Activated CD4-positive, alpha-beta T cell treated with anti-CD3 and anti-CD28 coated beads for 36 hours (primary cell): ENCODE measurements at regions of chr18 and their contacts with region 1.

Region 1: DNA sequence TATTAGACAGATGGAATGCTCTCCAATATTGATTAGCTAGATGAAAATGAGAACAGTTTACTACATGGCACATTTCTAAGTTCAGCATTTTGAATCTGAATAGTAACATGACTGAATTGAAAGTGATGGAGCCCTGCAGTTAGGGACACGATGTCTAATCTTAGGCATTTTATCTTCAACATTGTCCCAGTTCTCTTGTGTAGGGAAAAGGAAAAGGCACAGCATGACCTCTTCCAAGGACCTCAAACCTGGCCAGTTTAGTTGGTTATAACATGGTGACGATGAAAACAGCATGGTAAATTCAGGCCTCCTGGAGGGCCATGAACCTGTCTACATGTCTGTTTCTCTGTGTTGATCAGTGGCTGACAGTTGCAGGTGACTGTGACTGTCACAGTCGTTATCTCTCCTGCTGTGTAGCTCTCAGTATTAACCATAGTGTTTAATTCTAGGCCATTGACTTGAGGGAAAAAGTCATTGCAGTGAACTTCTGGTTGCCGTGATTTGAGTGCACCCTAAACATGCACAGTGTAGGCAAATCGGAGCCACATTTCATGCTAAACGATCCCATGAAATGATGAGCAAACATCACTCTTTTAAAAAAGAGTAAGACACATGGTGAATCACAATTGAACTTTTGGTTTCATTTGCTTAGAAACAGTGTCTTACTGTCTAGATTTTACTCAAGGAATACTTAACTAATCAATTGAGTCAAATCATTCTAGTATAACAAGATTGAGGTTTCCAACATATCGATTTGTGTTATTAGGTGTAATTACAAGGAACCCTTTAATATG is 129.7 kb downstream of the PHLPP1 start:
- DNase-seq: peak; percentile 63
- ATAC-seq: peak; percentile 90
- H3K4me3 Mint-ChIP-seq: peak overlapping the region; percentile 15
- H3K27ac Mint-ChIP-seq: peak overlapping the region; percentile 91
- H3K4me1 Mint-ChIP-seq: peaks cover 40% of the 10 kb centered on the region
- H3K27me3 Mint-ChIP-seq: no peaks in the 10 kb centered on the region

Region 2: DNA sequence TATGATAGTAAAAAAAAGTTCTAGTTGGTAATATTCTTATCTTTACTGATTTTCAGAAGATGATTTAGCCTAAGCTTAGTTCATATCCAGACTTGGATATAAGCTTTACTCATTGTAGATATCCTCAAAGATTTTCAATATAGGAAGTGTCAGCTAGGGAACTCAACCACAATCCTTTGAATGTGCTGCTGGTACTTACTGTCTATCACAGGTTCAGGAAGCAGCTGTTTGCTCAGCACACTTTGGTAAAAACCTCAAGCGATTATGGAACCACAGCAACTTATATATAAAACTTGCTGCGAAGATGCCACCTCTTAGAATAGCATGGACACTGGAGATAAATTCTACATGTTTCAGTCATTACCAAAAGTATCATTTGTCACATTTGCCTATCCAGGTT is 580.1 kb before region 1 on chr18:
- CTCF ChIA-PET with region 1: no interaction called
- POLR2A ChIA-PET with region 1: no interaction called
- intact Hi-C with region 1: no loop called
- DNase-seq: no peak
- ATAC-seq: no peak
- H3K4me3 Mint-ChIP-seq: no peak overlapping the region
- H3K27ac Mint-ChIP-seq: no peak overlapping the region
- H3K4me1 Mint-ChIP-seq: no peaks in the 10 kb centered on the region
- H3K27me3 Mint-ChIP-seq: no peaks in the 10 kb centered on the region

Region 3: GRCh38 chr18:62584241-62585120 is 260.6 kb before region 1 on chr18:
- CTCF ChIA-PET with region 1: no interaction called
- POLR2A ChIA-PET with region 1: no interaction called
- intact Hi-C with region 1: loop called (anchors 1 kb)
- DNase-seq: peak; percentile 93
- ATAC-seq: peak; percentile 71
- H3K4me3 Mint-ChIP-seq: peak overlapping the region; percentile 1
- H3K27ac Mint-ChIP-seq: peak overlapping the region; percentile 91
- H3K4me1 Mint-ChIP-seq: peaks cover 39% of the 10 kb centered on the region
- H3K27me3 Mint-ChIP-seq: no peaks in the 10 kb centered on the region

Region 4: DNA sequence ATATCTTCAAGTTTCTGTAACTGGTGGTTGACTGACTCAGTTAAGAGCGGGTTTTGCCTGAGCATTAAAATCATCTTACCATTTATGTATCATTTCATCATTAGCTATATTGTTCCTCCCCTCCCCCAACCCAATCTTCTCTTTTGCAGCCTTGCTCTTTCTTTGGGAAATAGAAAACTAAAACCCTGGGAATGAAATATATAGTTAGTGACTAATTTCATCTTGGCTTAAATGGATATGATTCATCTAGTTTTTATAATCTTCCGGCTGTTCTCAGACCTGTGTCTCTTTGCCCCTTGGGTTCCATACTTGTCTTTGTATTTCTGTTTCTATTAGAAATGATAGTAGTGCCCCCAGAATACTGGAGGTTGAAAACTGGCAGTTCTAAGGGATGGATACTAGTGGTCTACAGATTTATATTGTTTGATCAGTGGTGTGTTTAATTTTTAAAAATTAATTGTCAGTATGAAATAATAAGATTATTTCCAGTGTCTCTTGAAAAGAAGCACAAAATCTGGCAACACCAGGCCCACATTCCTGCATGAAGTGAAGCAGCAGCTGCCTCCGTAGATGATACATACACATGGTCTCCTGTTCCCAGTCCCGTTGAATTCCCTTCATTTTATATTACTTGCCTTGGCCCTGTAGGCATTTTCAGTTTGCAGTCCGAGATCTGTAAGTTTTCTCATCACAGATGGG is 85.2 kb before region 1 on chr18:
- CTCF ChIA-PET with region 1: no interaction called
- POLR2A ChIA-PET with region 1: no interaction called
- intact Hi-C with region 1: no loop called
- DNase-seq: no peak
- ATAC-seq: no peak
- H3K4me3 Mint-ChIP-seq: no peak overlapping the region
- H3K27ac Mint-ChIP-seq: no peak overlapping the region
- H3K4me1 Mint-ChIP-seq: no peaks in the 10 kb centered on the region
- H3K27me3 Mint-ChIP-seq: no peaks in the 10 kb centered on the region

Region 5: DNA sequence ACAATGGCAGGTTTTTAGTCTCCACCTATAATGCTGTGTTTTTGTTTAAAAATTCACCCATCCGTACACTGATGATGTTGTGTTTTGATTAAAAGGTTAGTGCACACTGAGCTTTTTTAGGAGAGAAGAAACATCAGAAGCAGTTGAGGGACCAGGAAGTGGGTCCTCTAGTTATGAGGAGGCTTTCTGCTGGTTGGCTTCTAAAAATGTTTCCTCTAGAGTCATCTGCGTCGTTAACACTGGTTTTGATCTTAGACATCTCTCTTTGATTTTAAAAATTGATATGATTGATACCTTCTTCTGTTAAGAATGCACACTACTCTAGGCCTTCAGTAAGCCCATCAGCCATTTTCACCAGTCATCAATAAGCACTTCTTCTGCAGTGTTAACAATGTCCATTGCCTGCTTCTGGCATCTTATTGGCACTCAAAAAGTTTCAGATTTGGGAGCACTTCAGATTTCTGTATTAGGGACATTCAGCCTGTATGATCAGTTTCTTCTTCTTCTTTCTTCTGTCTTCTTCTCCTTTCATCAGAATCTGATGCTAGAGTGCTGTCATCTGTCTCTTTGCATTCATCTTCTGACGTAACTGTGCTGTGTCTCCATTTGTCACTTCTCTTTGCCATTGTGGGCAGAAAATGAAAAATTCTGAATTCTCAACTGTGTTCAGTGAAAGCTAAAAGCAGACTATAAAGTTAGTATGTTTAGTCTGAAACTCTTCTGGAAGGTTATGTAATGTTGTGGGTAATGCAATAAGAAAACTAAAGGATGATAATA is 73.4 kb before region 1 on chr18:
- CTCF ChIA-PET with region 1: no interaction called
- POLR2A ChIA-PET with region 1: no interaction called
- intact Hi-C with region 1: loop called (anchors 1 kb)
- DNase-seq: peak; percentile 13
- ATAC-seq: peak; percentile 94
- H3K4me3 Mint-ChIP-seq: no peak overlapping the region
- H3K27ac Mint-ChIP-seq: peak overlapping the region; percentile 21
- H3K4me1 Mint-ChIP-seq: peaks cover 28% of the 10 kb centered on the region
- H3K27me3 Mint-ChIP-seq: no peaks in the 10 kb centered on the region

Region 6: DNA sequence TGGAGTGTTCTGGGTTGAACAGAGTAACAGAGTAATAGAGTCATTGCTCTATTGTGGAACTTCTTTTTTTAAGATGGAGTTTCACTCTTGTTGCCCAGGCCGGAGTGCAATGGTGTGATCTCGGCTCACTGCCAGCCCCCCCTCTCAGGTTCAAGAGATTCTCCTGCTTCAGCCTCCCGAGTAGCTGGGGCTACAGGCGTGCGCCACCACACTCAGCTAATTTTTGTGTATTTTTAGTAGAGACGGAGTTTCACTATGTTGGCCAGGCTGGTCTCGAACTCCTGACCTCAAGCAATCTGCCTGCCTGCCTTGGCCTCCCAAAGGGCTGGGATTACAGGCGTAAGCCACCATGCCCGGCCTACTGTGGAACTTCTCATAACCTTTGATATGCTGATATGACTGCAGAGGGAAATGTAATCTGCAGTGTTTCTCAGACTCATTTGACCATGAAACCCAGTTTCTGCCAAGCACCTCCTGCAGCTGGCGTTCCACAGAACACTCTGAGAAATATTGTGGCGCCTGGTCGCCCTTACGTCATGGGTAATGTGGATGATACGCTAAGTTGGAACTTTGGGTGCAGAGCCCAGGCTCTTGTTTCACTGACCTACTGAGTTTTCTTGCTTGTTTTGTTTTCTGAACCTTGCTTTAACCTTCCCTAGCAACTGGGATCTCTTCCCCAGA is 260.7 kb after region 1 on chr18:
- CTCF ChIA-PET with region 1: no interaction called
- POLR2A ChIA-PET with region 1: no interaction called
- intact Hi-C with region 1: loop called in 1 of 2 experiments (anchors 5 kb)
- DNase-seq: no peak
- ATAC-seq: no peak
- H3K4me3 Mint-ChIP-seq: no peak overlapping the region
- H3K27ac Mint-ChIP-seq: no peak overlapping the region
- H3K4me1 Mint-ChIP-seq: peaks cover 29% of the 10 kb centered on the region
- H3K27me3 Mint-ChIP-seq: peaks cover 4% of the 10 kb centered on the region

Region 7: DNA sequence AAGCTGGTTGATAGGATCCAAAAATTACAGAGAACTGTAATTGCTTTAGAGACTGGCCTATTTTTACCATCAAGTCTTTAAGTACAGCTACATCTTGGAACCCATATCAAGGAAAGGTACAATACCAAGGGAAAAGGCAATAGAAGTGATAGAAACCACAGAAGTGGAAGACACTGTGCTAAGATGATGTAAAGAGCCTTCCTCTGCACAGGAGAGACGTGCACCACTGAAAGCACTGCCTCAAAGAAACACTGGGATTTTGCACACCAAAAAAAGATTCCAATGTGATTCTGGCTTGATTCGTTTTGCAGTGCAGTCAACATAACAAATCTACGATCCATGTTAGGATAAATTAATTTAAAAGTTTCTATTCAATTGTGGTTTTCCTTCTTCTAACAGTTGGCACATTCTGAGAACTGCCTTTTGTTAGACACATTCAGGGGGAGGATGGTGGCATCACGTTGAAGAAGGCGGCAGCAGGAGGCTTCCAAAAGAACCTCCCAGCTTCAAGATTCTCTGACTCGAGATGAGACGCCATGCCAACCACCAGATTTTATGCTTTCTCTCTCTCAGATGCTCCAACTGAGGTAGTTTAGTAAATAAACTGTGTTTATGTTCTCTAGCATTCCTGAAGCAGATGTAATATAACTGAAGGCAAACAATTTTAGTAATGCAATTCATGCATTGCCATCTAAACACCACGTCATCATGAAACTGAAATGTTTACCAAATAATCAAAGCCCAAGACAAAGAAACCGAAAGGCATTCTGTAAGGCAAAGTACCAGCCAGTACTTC is 371.7 kb after region 1 on chr18:
- CTCF ChIA-PET with region 1: no interaction called
- POLR2A ChIA-PET with region 1: no interaction called
- intact Hi-C with region 1: loop called in 1 of 2 experiments (anchors 5 kb)
- DNase-seq: peak; percentile 56
- ATAC-seq: peak; percentile 28
- H3K4me3 Mint-ChIP-seq: peak overlapping the region; percentile 34
- H3K27ac Mint-ChIP-seq: peak overlapping the region; percentile 91
- H3K4me1 Mint-ChIP-seq: peaks cover 95% of the 10 kb centered on the region
- H3K27me3 Mint-ChIP-seq: no peaks in the 10 kb centered on the region